ENCODE measurements at regions of chr2 and their contacts with region 1.

Region 1: GRCh38 chr2:231482806-231483391 is 18.6 kb upstream of the NCL start:
- DNase-seq: no peak
- ATAC-seq: peak; percentile 90
- H3K4me3 ChIP-seq: peak overlapping the region; percentile 79
- H3K27ac ChIP-seq: peak overlapping the region; percentile 93
- H3K4me1 ChIP-seq: peaks cover 15% of the 10 kb centered on the region
- H3K27me3 ChIP-seq: no peaks in the 10 kb centered on the region
- CTCF ChIP-seq: peak; percentile 85 to 95 (median 91)
- EP300 ChIP-seq: no peak
- POLR2A ChIP-seq: peak; percentile 80
- RAD21 ChIP-seq: peak; percentile 48; the same call in 1 of the 2 replicates

Region 2: DNA sequence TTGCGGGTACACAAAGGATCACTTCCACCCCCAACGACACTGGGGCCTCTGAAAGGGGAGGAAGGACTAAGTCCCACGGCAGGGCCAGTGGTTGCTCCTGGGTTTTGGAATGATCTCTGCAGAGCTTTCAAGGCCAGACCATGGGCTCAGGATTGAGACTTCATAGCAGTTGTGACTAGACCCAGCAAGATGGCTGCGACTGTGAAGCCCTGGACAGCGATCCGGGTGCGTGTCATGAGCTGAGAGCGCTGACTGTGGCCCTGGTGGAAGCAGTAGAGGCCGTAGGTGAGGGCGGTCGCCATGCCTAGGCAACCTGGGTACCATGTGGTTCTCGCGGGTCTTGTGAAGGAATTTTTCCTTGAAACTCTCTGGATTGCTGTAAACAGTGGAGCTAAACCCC is 45.9 kb before region 1 on chr2:
- CTCF ChIA-PET with region 1: no interaction called
- POLR2A ChIA-PET with region 1: no interaction called
- RAD21 ChIA-PET with region 1: no interaction called
- SMC1A ChIA-PET with region 1: no interaction called
- in situ Hi-C with region 1: no loop called
- intact Hi-C with region 1: no loop called
- DNase-seq: no peak
- ATAC-seq: no peak
- H3K4me3 ChIP-seq: no peak overlapping the region
- H3K27ac ChIP-seq: no peak overlapping the region
- H3K4me1 ChIP-seq: no peaks in the 10 kb centered on the region
- H3K27me3 ChIP-seq: no peaks in the 10 kb centered on the region
- CTCF ChIP-seq: no peak
- EP300 ChIP-seq: no peak
- POLR2A ChIP-seq: no peak
- RAD21 ChIP-seq: no peak

Region 3: GRCh38 chr2:231514103-231514950 is 31.4 kb after region 1 on chr2:
- CTCF ChIA-PET with region 1: interaction called, 15 read pairs
- POLR2A ChIA-PET with region 1: interaction called, 4 read pairs
- RAD21 ChIA-PET with region 1: interaction called, 5 read pairs
- SMC1A ChIA-PET with region 1: interaction called, 9 read pairs
- in situ Hi-C with region 1: no loop called
- intact Hi-C with region 1: no loop called
- DNase-seq: peak; percentile 81
- ATAC-seq: peak; percentile 100
- H3K4me3 ChIP-seq: peak overlapping the region; percentile 91
- H3K27ac ChIP-seq: peak overlapping the region; percentile 82
- H3K4me1 ChIP-seq: peaks cover 9% of the 10 kb centered on the region
- H3K27me3 ChIP-seq: no peaks in the 10 kb centered on the region
- CTCF ChIP-seq: no peak
- EP300 ChIP-seq: no peak
- POLR2A ChIP-seq: peak; percentile 97
- RAD21 ChIP-seq: no peak

Region 4: DNA sequence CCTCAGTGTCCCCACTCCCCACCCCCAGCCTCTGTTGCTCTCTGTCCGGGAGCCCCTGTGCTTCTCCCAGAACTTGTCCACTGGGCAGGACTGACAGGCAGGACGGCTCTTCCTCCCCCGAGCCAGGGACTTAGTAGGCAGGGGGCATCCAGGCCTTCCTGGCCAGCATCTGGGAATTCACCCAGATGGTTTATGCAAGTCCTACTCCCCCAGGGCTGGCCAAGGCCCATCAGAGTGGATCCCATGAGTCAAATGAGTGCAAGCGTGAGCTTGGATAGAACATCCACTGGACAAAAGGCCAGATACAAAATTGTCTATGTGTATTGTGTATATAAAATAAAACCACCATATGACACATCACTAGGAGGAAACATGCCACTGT is 39.9 kb after region 1 on chr2:
- CTCF ChIA-PET with region 1: interaction called, 15 read pairs
- POLR2A ChIA-PET with region 1: interaction called, 4 read pairs
- RAD21 ChIA-PET with region 1: no interaction called
- SMC1A ChIA-PET with region 1: interaction called, 3 read pairs
- in situ Hi-C with region 1: no loop called
- intact Hi-C with region 1: no loop called
- DNase-seq: no peak
- ATAC-seq: no peak
- H3K4me3 ChIP-seq: no peak overlapping the region
- H3K27ac ChIP-seq: no peak overlapping the region
- H3K4me1 ChIP-seq: peaks cover 5% of the 10 kb centered on the region
- H3K27me3 ChIP-seq: no peaks in the 10 kb centered on the region
- CTCF ChIP-seq: no peak
- EP300 ChIP-seq: no peak
- POLR2A ChIP-seq: no peak
- RAD21 ChIP-seq: no peak

Region 5: GRCh38 chr2:231530091-231531011 is 47.5 kb after region 1 on chr2 and contains the start of gene NMUR1:
- CTCF ChIA-PET with region 1: interaction called, 18 read pairs
- POLR2A ChIA-PET with region 1: no interaction called
- RAD21 ChIA-PET with region 1: no interaction called
- SMC1A ChIA-PET with region 1: no interaction called
- in situ Hi-C with region 1: no loop called
- intact Hi-C with region 1: no loop called
- DNase-seq: no peak
- ATAC-seq: peak; percentile 97
- H3K4me3 ChIP-seq: peak within 1 kb of the TSS; percentile 41; the same call in 1 of the 2 replicates
- H3K27ac ChIP-seq: no peak within 1 kb of the TSS
- H3K4me1 ChIP-seq: peaks cover 5% of the 10 kb centered on the region
- H3K27me3 ChIP-seq: no peaks in the 10 kb centered on the region
- CTCF ChIP-seq: peak; percentile 71 to 85 (median 75); a peak in 5 of 6 replicates
- EP300 ChIP-seq: no peak
- POLR2A ChIP-seq: no peak
- RAD21 ChIP-seq: peak; percentile 88
- polyA plus RNA-seq, gene NMUR1: 0.02 TPM in 1 of 2 experiments, not detected in the other

Region 6: GRCh38 chr2:231666171-231667095 is 183.5 kb after region 1 on chr2:
- CTCF ChIA-PET with region 1: no interaction called
- POLR2A ChIA-PET with region 1: no interaction called
- RAD21 ChIA-PET with region 1: no interaction called
- SMC1A ChIA-PET with region 1: no interaction called
- in situ Hi-C with region 1: no loop called
- intact Hi-C with region 1: no loop called
- DNase-seq: peak; percentile 86
- ATAC-seq: peak; percentile 75
- H3K4me3 ChIP-seq: peak overlapping the region; percentile 68
- H3K27ac ChIP-seq: peak overlapping the region; percentile 97
- H3K4me1 ChIP-seq: peaks cover 49% of the 10 kb centered on the region
- H3K27me3 ChIP-seq: no peaks in the 10 kb centered on the region
- CTCF ChIP-seq: no peak
- EP300 ChIP-seq: peak; percentile 24 to 26; a peak in 2 of 4 replicates
- POLR2A ChIP-seq: peak; percentile 94
- RAD21 ChIP-seq: no peak

Measured in GM12878 (cell line).